PC-3 (cell line): ENCODE measurements at regions of chr21 and their contacts with region 1.

Region 1: GRCh38 chr21:24895885-24896734 is 711.2 kb downstream of the MRPL39 start:
- DNase-seq: peak; percentile 58
- ATAC-seq: peak; percentile 94
- H3K4me3 ChIP-seq: no peak overlapping the region
- H3K27ac ChIP-seq: no peak overlapping the region
- H3K4me1 ChIP-seq: no peaks in the 10 kb centered on the region
- H3K27me3 ChIP-seq: no peaks in the 10 kb centered on the region
- CTCF ChIP-seq: peak; percentile 71

Region 2: GRCh38 chr21:24941316-24942185 is 45.4 kb after region 1 on chr21:
- CTCF ChIA-PET with region 1: no interaction called
- POLR2A ChIA-PET with region 1: no interaction called
- intact Hi-C with region 1: no loop called
- DNase-seq: peak; percentile 44
- ATAC-seq: peak; percentile 95
- H3K4me3 ChIP-seq: no peak overlapping the region
- H3K27ac ChIP-seq: no peak overlapping the region
- H3K4me1 ChIP-seq: peaks cover 4% of the 10 kb centered on the region; the same call in 1 of the 2 replicates
- H3K27me3 ChIP-seq: no peaks in the 10 kb centered on the region
- CTCF ChIP-seq: no peak

Region 3: GRCh38 chr21:24969068-24969467 is 73.0 kb after region 1 on chr21:
- CTCF ChIA-PET with region 1: no interaction called
- POLR2A ChIA-PET with region 1: no interaction called
- intact Hi-C with region 1: no loop called
- DNase-seq: no peak
- ATAC-seq: no peak
- H3K4me3 ChIP-seq: no peak overlapping the region
- H3K27ac ChIP-seq: no peak overlapping the region
- H3K4me1 ChIP-seq: no peaks in the 10 kb centered on the region
- H3K27me3 ChIP-seq: no peaks in the 10 kb centered on the region
- CTCF ChIP-seq: no peak

Region 4: DNA sequence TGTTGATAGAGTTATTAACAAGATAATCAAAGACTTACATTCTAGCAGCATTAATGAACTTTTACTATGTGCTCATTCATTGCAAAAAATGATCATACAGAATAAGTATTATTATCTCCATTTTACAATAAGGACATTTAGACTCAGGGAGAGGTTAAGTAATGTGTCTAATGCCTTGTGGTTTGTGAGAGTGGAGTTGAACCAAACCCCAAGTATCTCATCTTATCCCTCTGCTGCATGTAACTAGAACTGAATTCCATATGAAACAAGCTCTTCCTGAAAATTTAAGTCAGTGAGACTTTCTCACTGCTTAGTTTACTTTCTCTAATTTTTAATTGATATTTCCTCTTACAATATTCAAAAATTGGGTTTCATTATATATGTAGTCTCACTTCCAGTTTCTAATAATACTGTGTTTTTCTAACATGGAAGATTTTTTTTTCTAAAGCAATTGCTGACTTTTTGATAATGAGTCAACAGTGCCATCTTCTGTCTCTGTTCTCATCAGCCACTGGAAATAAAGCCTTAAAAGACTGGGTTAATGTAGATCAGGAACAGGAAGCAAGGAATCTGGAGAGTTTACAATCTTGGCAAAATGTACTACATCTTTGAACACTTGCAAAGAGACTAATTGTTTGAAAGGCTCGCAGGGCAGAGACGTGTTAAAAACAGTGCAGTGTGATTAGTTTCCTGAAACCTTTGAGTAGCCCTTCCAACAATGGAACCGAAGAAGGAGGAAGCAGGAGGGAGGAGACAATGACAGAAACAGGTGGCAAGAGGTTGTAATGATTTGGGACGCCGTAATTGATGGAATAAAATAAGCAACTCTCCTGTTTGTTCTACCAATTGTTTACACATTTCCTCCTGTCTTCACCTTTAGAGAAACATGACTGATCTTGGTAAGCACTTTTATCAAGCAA is 143.6 kb after region 1 on chr21:
- CTCF ChIA-PET with region 1: interaction called, 3 read pairs
- POLR2A ChIA-PET with region 1: no interaction called
- intact Hi-C with region 1: loop called (anchors 1 kb)
- DNase-seq: peak; percentile 47
- ATAC-seq: peak; percentile 80
- H3K4me3 ChIP-seq: peak overlapping the region; percentile 50
- H3K27ac ChIP-seq: no peak overlapping the region
- H3K4me1 ChIP-seq: no peaks in the 10 kb centered on the region
- H3K27me3 ChIP-seq: no peaks in the 10 kb centered on the region
- CTCF ChIP-seq: peak; percentile 61